ENCODE measurements at regions of chr20 and their contacts with region 1.

Region 1: GRCh38 chr20:44442298-44443070 is 33.2 kb upstream of the TTPAL start:
- DNase-seq: no peak
- ATAC-seq: no peak; the same call in 1 of the 2 replicates
- H3K4me3 ChIP-seq: no peak overlapping the region
- H3K27ac ChIP-seq: no peak overlapping the region
- H3K4me1 ChIP-seq: no peaks in the 10 kb centered on the region
- H3K27me3 ChIP-seq: no peaks in the 10 kb centered on the region
- CTCF ChIP-seq: no peak

Region 2: GRCh38 chr20:43322851-43323250 is 1119.6 kb before region 1 on chr20:
- CTCF ChIA-PET with region 1: interaction called, 11 read pairs
- POLR2A ChIA-PET with region 1: no interaction called
- in situ Hi-C with region 1: no loop called
- intact Hi-C with region 1: no loop called
- DNase-seq: no peak
- ATAC-seq: no peak
- H3K4me3 ChIP-seq: no peak overlapping the region
- H3K27ac ChIP-seq: no peak overlapping the region
- H3K4me1 ChIP-seq: no peaks in the 10 kb centered on the region
- H3K27me3 ChIP-seq: peaks cover 5% of the 10 kb centered on the region; the same call in 1 of the 2 replicates
- CTCF ChIP-seq: no peak

Region 3: DNA sequence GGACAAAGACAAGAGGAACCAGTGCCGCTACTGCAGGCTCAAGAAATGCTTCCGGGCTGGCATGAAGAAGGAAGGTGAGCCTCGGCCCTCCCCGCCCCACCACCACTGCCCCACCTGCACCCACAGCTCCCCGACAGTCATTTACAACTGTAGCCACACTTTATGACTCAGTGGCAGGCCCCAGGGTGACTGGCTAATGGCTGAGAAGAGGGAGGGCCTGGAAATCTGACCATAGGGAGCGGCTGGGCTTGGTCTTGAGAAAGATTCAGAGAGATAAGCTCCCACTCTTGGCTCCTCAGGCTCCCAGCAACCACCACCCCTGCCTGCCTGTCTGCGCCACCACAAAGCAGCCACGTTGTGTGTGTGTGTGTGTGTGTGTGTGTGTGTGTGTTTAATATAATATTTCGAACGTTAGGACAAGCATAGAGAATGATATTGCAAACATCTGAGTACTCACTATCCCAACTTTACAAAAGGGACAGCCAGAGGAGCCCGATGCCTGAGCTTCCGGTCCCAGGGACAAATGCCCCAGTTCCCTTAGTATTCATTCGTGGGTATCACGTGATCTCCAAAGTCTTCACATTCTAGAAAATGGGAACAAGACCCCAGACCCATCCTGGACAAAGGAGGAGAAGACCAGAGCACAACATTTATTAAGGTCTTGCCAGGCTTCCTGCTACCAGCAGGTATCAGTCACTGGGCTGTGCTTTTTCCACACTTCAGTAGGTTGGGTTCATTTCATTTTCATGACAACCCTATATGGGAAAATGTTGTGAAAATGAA is 34.9 kb before region 1 on chr20:
- CTCF ChIA-PET with region 1: no interaction called
- POLR2A ChIA-PET with region 1: no interaction called
- in situ Hi-C with region 1: no loop called
- intact Hi-C with region 1: no loop called
- DNase-seq: no peak
- ATAC-seq: no peak
- H3K4me3 ChIP-seq: no peak overlapping the region
- H3K27ac ChIP-seq: no peak overlapping the region
- H3K4me1 ChIP-seq: no peaks in the 10 kb centered on the region
- H3K27me3 ChIP-seq: no peaks in the 10 kb centered on the region
- CTCF ChIP-seq: no peak

Region 4: GRCh38 chr20:44495802-44496481 is 53.5 kb after region 1 on chr20:
- CTCF ChIA-PET with region 1: no interaction called
- POLR2A ChIA-PET with region 1: no interaction called
- in situ Hi-C with region 1: no loop called
- intact Hi-C with region 1: no loop called
- DNase-seq: peak; percentile 97
- ATAC-seq: peak; percentile 79
- H3K4me3 ChIP-seq: no peak overlapping the region
- H3K27ac ChIP-seq: no peak overlapping the region
- H3K4me1 ChIP-seq: no peaks in the 10 kb centered on the region
- H3K27me3 ChIP-seq: no peaks in the 10 kb centered on the region
- CTCF ChIP-seq: no peak